T-cell (primary cell): ENCODE measurements at regions of chr5 and their contacts with region 1.

Region 1: DNA sequence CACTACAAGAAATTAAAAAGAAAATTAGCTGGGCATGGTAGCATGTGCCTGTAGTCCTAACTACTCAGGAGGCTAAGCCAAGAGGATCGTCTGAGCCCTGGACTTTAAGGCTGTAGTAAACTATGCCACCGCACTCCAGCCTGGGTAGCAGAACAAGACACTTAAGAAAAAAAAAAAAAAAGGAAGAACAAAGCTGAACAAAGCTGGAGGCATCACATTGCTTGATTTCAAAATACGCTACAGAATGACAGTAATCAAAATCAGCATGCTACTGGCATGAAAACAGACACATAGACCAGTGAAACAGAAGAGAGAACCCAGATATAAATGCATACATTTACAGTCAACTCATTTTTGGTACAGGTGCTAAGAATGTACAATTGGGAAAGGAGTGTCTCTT is 14.5 kb upstream of the OTULIN start:
- DNase-seq: no peak
- ATAC-seq: no peak
- H3K4me3 ChIP-seq: no peak overlapping the region
- H3K4me3 Mint-ChIP-seq: no peak overlapping the region
- H3K27ac ChIP-seq: no peak overlapping the region
- H3K27ac Mint-ChIP-seq: no peak overlapping the region
- H3K4me1 ChIP-seq: peaks cover 0 to 4% of the 10 kb centered on the region in 2 experiments
- H3K4me1 Mint-ChIP-seq: peaks cover 1 to 9% (median 2%) of the 10 kb centered on the region in 3 donors
- H3K27me3 ChIP-seq: peaks cover 0 to 6% of the 10 kb centered on the region in 2 experiments
- H3K27me3 Mint-ChIP-seq: peaks cover 5 to 15% of the 10 kb centered on the region in 2 donors

Region 2: DNA sequence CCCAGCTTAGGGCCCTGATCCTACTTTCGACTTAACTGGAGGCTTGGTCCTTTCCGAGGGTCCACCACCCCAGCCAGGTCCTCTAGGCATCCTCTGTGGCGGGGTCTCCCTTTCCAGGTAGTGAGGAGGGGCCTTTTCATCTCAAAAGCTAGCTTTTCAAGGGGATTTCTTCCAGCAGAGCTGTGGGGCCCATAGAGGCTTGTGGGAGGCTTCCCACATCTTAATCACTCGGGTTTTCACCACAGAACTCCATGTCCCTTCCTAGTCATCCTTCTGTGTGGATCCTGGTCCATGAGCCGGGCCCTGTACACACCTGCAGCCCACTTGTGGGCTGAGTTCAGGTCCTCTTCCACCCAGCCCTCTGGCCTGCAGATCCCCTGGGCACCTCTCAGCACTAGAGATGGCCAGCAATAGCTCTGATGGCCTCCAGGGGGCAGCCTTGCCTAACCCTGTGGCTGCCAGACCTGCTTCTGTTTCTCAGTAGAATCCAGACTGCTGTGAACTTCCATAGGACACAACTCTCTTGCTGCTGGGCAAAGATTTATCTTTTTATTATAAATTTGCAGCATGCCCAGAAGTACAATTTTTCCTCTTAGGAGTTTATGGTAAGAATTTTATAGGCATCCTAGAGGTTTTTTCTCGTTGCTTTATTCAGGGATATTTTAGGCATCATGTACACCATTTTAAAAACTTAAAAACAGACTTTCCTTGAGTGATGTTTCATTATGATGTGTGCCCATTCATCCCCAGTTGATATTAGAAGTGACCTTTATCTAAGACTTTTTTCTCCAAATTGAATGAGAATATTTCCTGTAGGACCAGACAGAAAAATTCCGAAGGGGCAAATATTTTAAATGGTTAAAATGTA is 298.0 kb before region 1 on chr5:
- CTCF ChIA-PET with region 1: interaction called, 17 to 39 read pairs
- POLR2A ChIA-PET with region 1: no interaction called
- DNase-seq: peak; percentile 6 to 79 (median 46)
- ATAC-seq: peak; percentile 82 to 87 (median 84)
- H3K4me3 ChIP-seq: no peak overlapping the region
- H3K4me3 Mint-ChIP-seq: no peak overlapping the region
- H3K27ac ChIP-seq: no peak overlapping the region
- H3K27ac Mint-ChIP-seq: no peak overlapping the region
- H3K4me1 ChIP-seq: no peaks in the 10 kb centered on the region
- H3K4me1 Mint-ChIP-seq: no peaks in the 10 kb centered on the region
- H3K27me3 ChIP-seq: peaks cover 0 to 10% of the 10 kb centered on the region in 2 experiments
- H3K27me3 Mint-ChIP-seq: peaks cover 7 to 8% of the 10 kb centered on the region in 2 donors

Region 3: DNA sequence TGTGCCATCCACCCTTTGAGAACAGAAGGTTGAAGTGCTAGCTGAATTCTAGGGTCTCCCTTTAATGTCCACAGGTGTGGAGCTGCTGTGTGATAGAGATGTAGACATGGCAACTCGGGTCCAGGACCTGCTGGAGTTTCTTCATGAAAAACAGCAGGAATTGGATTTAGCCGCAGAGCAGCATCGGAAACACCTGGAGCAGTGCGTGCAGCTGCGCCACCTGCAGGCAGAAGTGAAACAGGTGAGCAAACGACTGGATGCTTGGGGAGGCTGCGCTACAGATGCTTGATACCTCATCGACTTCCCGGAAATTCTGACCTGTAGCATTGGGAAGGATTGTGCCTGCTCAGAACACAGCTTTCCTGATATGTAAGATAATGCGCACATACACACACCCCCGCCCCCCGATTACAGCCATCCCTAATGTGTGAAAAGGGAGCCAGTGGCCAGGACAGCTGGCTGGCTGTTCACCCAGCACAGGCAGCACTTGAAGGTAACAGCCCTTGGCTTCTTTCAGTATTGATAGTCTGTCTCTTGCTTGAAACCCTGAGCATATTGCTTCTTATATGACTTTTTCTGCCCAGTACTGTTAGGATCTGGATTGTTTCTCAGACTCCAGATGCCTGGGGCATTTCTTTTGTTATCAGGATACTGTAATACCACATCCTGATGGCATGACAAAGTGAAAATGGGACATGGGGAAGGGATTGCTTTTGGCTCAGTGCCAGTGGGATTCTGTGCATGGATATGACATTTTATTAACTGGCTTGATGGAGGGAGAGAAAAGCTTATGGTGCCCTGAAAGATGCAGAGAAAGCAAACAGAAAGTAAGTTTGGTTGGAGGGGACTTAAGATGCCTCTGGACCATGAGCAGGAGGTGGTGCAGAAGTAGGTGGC is 285.2 kb before region 1 on chr5:
- CTCF ChIA-PET with region 1: interaction called, 38 to 75 read pairs
- POLR2A ChIA-PET with region 1: no interaction called
- DNase-seq: peak in 3 of 35 experiments; percentile 5 to 22 (median 5)
- ATAC-seq: no peak
- H3K4me3 ChIP-seq: no peak overlapping the region
- H3K4me3 Mint-ChIP-seq: no peak overlapping the region
- H3K27ac ChIP-seq: no peak overlapping the region
- H3K27ac Mint-ChIP-seq: peak overlapping the region in 1 of 2 donors; percentile 37
- H3K4me1 ChIP-seq: peaks cover 25 to 27% of the 10 kb centered on the region in 2 experiments
- H3K4me1 Mint-ChIP-seq: peaks cover 30 to 39% (median 30%) of the 10 kb centered on the region in 3 donors
- H3K27me3 ChIP-seq: no peaks in the 10 kb centered on the region
- H3K27me3 Mint-ChIP-seq: peaks cover 0 to 3% of the 10 kb centered on the region in 2 donors

Region 4: DNA sequence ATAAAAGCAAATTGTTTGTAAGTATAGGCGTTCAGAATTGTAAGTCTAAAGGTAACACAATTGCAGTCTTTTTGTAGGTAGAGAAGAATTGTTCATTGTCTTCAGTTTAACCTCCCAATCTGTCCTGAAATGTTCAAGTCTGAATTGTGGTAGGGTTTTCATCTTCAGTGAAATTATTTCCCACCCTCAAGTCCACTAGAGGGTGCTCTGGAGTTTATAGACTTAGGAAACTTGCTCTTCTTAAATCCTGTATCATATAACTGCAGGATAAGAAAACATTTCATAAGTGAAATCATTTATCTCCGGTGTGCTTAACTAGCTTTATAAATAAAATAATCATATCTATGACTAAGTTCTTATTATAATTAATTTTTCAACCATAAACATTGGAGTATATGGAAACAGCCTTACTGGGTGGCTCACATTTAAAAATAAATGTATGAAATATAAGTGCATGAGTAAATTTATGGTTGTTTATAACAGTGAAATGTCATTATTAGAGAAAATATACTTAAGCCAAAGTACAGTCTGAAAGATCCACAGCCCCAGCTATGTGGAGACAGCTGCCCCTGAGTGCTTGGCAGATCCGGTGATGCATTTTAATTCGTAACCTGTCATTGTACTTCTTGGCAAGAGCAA is 250.9 kb before region 1 on chr5:
- CTCF ChIA-PET with region 1: interaction called, 27 to 76 read pairs
- POLR2A ChIA-PET with region 1: interaction called in 1 of 2 experiments, 5 read pairs
- DNase-seq: peak in 8 of 35 experiments; percentile 7 to 73 (median 26)
- ATAC-seq: peak in 3 of 4 experiments; percentile 35 to 61 (median 47)
- H3K4me3 ChIP-seq: no peak overlapping the region
- H3K4me3 Mint-ChIP-seq: no peak overlapping the region
- H3K27ac ChIP-seq: no peak overlapping the region
- H3K27ac Mint-ChIP-seq: no peak overlapping the region
- H3K4me1 ChIP-seq: no peaks in the 10 kb centered on the region
- H3K4me1 Mint-ChIP-seq: peaks cover 15 to 18% (median 15%) of the 10 kb centered on the region in 3 donors
- H3K27me3 ChIP-seq: peaks cover 0 to 4% of the 10 kb centered on the region in 2 experiments
- H3K27me3 Mint-ChIP-seq: no peaks in the 10 kb centered on the region

Region 5: GRCh38 chr5:14660833-14661232 is 10.8 kb after region 1 on chr5:
- CTCF ChIA-PET with region 1: interaction called, 7 to 10 read pairs
- POLR2A ChIA-PET with region 1: no interaction called
- DNase-seq: no peak
- ATAC-seq: no peak
- H3K4me3 ChIP-seq: no peak overlapping the region
- H3K4me3 Mint-ChIP-seq: no peak overlapping the region
- H3K27ac ChIP-seq: no peak overlapping the region
- H3K27ac Mint-ChIP-seq: no peak overlapping the region
- H3K4me1 ChIP-seq: peaks cover 10 to 14% of the 10 kb centered on the region in 2 experiments
- H3K4me1 Mint-ChIP-seq: peaks cover 23 to 44% (median 27%) of the 10 kb centered on the region in 3 donors
- H3K27me3 ChIP-seq: no peaks in the 10 kb centered on the region
- H3K27me3 Mint-ChIP-seq: no peaks in the 10 kb centered on the region